K562 (cell line): ENCODE measurements at regions of chr17 and their contacts with region 1.

Region 1: DNA sequence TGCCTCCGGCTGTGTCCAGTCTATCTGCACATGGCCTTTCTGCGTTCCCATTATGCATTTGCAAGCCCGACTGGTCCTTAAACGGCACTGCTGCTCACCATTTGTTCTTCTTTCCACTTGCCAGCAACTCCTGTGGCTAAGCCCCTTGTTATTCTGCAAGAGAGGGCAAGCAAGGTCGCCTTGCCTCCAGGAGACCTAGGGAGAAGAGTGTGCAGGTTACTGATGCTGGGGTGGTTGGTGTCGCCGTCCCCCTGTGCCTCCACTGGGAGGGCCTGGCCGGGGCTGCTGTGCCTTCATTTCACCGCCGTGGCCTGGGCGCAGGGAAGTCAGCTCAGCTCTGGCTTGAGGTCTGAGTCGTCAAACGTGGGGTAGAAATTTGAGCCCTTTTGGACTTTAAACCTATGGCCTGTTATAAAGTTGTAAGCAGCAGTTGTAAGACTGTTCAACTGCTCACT is 12.7 kb downstream of the SLC6A4 start:
- DNase-seq: no peak
- ATAC-seq: no peak
- H3K4me3 ChIP-seq: no peak overlapping the region
- H3K27ac ChIP-seq: no peak overlapping the region
- H3K4me1 ChIP-seq: peaks cover 14 to 16% of the 10 kb centered on the region in 2 experiments; a peak in 4 of 5 replicates
- H3K27me3 ChIP-seq: peaks cover 2 to 5% of the 10 kb centered on the region in 2 experiments; a peak in 3 of 5 replicates
- CTCF ChIP-seq: no peak
- EP300 ChIP-seq: no peak
- POLR2A ChIP-seq: no peak
- RAD21 ChIP-seq: no peak

Region 2: GRCh38 chr17:30134551-30134950 is 88.2 kb before region 1 on chr17:
- CTCF ChIA-PET with region 1: no interaction called
- POLR2A ChIA-PET with region 1: no interaction called
- in situ Hi-C with region 1: no loop called
- intact Hi-C with region 1: no loop called
- DNase-seq: no peak
- ATAC-seq: no peak
- H3K4me3 ChIP-seq: no peak overlapping the region
- H3K27ac ChIP-seq: no peak overlapping the region
- H3K4me1 ChIP-seq: peaks cover 0 to 3% of the 10 kb centered on the region in 2 experiments; a peak in 1 of 5 replicates
- H3K27me3 ChIP-seq: no peaks in the 10 kb centered on the region
- CTCF ChIP-seq: no peak
- EP300 ChIP-seq: no peak
- POLR2A ChIP-seq: no peak; the same call in 1 of the 2 replicates
- RAD21 ChIP-seq: no peak

Region 3: GRCh38 chr17:30244853-30245385 is 22.2 kb after region 1 on chr17:
- CTCF ChIA-PET with region 1: no interaction called
- POLR2A ChIA-PET with region 1: interaction called, 11 read pairs
- in situ Hi-C with region 1: no loop called
- intact Hi-C with region 1: no loop called
- DNase-seq: peak in 1 of 4 experiments; percentile 27
- ATAC-seq: peak; percentile 73
- H3K4me3 ChIP-seq: no peak overlapping the region
- H3K27ac ChIP-seq: no peak overlapping the region
- H3K4me1 ChIP-seq: peaks cover 0 to 5% of the 10 kb centered on the region in 2 experiments; a peak in 3 of 5 replicates
- H3K27me3 ChIP-seq: no peaks in the 10 kb centered on the region
- CTCF ChIP-seq: no peak
- EP300 ChIP-seq: no peak
- POLR2A ChIP-seq: no peak; the same call in 1 of the 2 replicates
- RAD21 ChIP-seq: peak in 1 of 2 experiments; percentile 4; a peak in 1 of 4 replicates

Region 4: DNA sequence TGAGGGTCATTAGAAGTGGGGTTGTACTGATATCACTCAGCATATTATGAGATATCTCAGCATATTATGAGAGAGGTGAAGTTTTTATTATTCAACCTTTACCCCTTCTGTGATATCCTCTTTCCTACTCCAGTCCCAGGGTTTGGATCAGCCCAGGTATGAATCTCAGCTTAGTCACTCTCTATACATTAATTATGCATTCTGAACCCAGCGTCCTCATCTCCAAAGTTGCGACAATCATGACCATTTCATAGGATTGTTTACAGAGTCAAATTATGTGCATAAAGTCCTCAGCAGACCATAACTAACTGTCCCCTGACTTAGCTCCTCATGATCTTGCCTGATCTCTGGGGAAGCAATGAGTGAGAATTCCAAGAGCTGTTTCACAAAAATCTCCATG is 89.5 kb after region 1 on chr17:
- CTCF ChIA-PET with region 1: no interaction called
- POLR2A ChIA-PET with region 1: no interaction called
- in situ Hi-C with region 1: no loop called
- intact Hi-C with region 1: no loop called
- DNase-seq: no peak
- ATAC-seq: no peak
- H3K4me3 ChIP-seq: no peak overlapping the region
- H3K27ac ChIP-seq: no peak overlapping the region
- H3K4me1 ChIP-seq: peaks cover 0 to 5% of the 10 kb centered on the region in 2 experiments; a peak in 1 of 5 replicates
- H3K27me3 ChIP-seq: no peaks in the 10 kb centered on the region
- CTCF ChIP-seq: no peak
- EP300 ChIP-seq: no peak
- POLR2A ChIP-seq: no peak
- RAD21 ChIP-seq: no peak